Heart left ventricle (tissue), 16 donors: ENCODE measurements at regions of chr17 and their contacts with region 1.

Region 1: GRCh38 chr17:7419819-7420610 is at the start of gene SPEM1:
- DNase-seq: no peak
- ATAC-seq: no peak
- H3K4me3 ChIP-seq: no peak within 1 kb of the TSS
- H3K27ac ChIP-seq: no peak within 1 kb of the TSS
- H3K4me1 ChIP-seq: no peaks in the 10 kb centered on the region
- H3K27me3 ChIP-seq: no peaks in the 10 kb centered on the region
- CTCF ChIP-seq: no peak
- POLR2A ChIP-seq: no peak
- total RNA-seq, gene SPEM1: not detected

Region 2: DNA sequence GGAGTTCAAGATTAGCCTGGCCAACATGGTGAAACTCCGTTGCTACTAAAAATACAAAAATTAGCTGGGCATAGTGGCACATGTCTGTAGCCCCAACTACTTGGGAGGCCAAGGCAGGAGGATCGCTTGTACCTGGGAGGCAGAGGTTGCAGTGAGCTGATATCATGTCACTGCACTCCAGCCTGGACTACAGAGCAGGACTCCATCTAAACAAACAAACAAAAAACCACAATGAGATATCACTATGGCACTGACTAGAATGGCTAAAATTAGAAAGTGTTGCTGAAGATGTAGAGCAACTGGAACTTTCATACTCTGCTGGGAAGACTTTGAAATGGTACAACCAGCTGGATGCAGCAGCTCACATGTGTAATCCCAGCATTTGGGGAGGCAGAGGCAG is 45.7 kb before region 1 on chr17:
- intact Hi-C with region 1: loop called in 1 of 10 experiments (anchors 10 kb)
- DNase-seq: no peak
- ATAC-seq: no peak
- H3K4me3 ChIP-seq: no peak overlapping the region
- H3K27ac ChIP-seq: no peak overlapping the region
- H3K4me1 ChIP-seq: no peaks in the 10 kb centered on the region
- H3K27me3 ChIP-seq: peaks cover 0 to 11% (median 0%) of the 10 kb centered on the region in 9 donors
- CTCF ChIP-seq: no peak
- POLR2A ChIP-seq: no peak